Naive thymus-derived CD4-positive, alpha-beta T cell (primary cell): ENCODE measurements at regions of chr12 and their contacts with region 1.

Region 1: GRCh38 chr12:81992461-81992860 is 233.3 kb upstream of the PPFIA2 start:
- DNase-seq: peak in 7 of 9 donors; percentile 30 to 61 (median 51)
- ATAC-seq: peak; percentile 85
- H3K4me3 ChIP-seq: no peak overlapping the region
- H3K4me3 Mint-ChIP-seq: no peak overlapping the region
- H3K27ac ChIP-seq: no peak overlapping the region
- H3K27ac Mint-ChIP-seq: no peak overlapping the region
- H3K4me1 ChIP-seq: no peaks in the 10 kb centered on the region
- H3K4me1 Mint-ChIP-seq: peaks cover 0 to 7% (median 5%) of the 10 kb centered on the region in 7 donors
- H3K27me3 ChIP-seq: no peaks in the 10 kb centered on the region
- H3K27me3 Mint-ChIP-seq: no peaks in the 10 kb centered on the region

Region 2: DNA sequence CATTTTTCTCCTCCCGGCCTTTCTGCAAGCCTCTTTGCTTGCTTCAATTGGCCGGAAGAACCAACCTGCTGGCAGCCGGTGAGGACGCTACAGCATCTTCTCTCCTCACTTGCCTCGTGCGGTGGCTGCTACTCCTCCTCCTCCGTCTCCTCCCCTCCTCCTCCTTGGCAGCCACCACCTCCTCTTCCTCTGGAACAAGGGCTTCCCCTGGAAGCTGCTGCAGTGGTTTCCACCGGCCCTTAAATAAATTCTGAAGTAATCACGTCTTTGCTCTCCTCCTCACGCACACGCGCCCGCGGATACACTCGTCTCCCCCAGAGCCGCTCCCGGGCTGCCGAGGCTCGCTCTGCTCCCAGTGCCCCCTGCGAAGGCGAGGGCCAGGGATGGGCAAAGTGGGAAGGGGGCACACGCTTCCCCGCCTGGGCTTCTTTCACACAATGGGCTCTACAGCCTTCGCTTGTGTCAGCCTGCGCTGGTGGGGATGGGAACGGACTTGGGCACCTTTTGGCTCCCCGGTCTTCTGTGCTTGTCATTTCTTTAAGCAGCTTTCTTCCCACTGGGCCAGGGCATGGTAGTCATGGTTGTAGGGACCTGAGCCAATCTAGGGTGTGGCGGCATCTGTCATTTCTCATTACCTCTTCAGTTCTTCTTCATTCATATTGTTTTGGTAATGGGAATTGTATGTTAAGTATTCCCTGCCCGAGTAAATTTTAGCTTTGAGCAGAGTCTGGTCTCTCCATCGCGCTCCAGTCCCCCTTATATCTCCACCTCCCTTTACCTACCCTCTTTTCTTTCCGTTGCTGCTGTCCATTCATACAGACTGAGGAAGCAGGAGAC is 233.0 kb before region 1 on chr12 and contains the start of gene PPFIA2:
- CTCF ChIA-PET with region 1: no interaction called
- POLR2A ChIA-PET with region 1: no interaction called
- intact Hi-C with region 1: loop called in 1 of 2 experiments (anchors 1 kb)
- DNase-seq: peak in 6 of 9 donors; percentile 3 to 27 (median 22)
- ATAC-seq: peak; percentile 47
- H3K4me3 ChIP-seq: peak within 1 kb of the TSS; percentile 26
- H3K4me3 Mint-ChIP-seq: peak within 1 kb of the TSS; percentile 58 to 83 (median 75)
- H3K27ac ChIP-seq: no peak within 1 kb of the TSS
- H3K27ac Mint-ChIP-seq: no peak within 1 kb of the TSS
- H3K4me1 ChIP-seq: no peaks in the 10 kb centered on the region
- H3K4me1 Mint-ChIP-seq: peaks cover 10 to 19% (median 15%) of the 10 kb centered on the region in 7 donors
- H3K27me3 ChIP-seq: peaks cover 0 to 2% of the 10 kb centered on the region in 2 donors
- H3K27me3 Mint-ChIP-seq: peaks cover 43 to 52% (median 46%) of the 10 kb centered on the region in 5 donors
- total RNA-seq, gene PPFIA2: not detected

Region 3: GRCh38 chr12:81797100-81797499 is 195.4 kb before region 1 on chr12:
- CTCF ChIA-PET with region 1: interaction called, 3 read pairs
- POLR2A ChIA-PET with region 1: no interaction called
- intact Hi-C with region 1: loop called in 1 of 2 experiments (anchors 2 kb)
- DNase-seq: peak in 2 of 9 donors; percentile 4 to 7
- ATAC-seq: no peak
- H3K4me3 ChIP-seq: no peak overlapping the region
- H3K4me3 Mint-ChIP-seq: no peak overlapping the region
- H3K27ac ChIP-seq: no peak overlapping the region
- H3K27ac Mint-ChIP-seq: no peak overlapping the region
- H3K4me1 ChIP-seq: no peaks in the 10 kb centered on the region
- H3K4me1 Mint-ChIP-seq: no peaks in the 10 kb centered on the region
- H3K27me3 ChIP-seq: no peaks in the 10 kb centered on the region
- H3K27me3 Mint-ChIP-seq: peaks cover 1 to 20% (median 11%) of the 10 kb centered on the region in 5 donors

Region 4: DNA sequence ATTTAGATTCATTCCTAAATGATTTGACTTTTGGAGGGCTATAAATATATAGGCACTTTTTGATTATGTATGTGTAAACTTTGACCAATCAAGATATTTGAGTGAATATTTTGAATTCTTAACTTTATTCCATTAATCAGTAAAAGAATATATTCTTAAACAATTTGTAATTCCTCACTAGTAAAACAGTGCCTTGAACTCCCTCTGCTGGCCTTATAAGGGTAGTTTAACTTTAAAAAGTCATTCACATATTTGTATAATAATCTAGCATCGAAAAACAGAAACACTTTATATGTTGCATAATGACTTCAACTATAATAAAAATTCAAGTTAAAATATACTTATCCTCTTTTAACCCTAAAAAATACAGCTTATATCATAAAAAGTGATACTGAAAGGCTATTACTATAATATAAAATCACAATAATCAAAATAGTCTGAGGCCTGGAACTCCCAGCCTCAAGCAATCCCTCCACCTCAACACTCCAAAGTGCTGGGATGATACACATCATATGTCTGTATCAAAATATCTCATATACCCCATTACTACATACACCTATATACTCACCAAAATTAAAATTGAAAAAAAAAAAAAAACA is 334.5 kb after region 1 on chr12:
- CTCF ChIA-PET with region 1: interaction called, 6 read pairs
- POLR2A ChIA-PET with region 1: no interaction called
- intact Hi-C with region 1: loop called in 1 of 2 experiments (anchors 1 kb)
- DNase-seq: peak in 3 of 9 donors; percentile 7 to 25 (median 9)
- ATAC-seq: no peak
- H3K4me3 ChIP-seq: no peak overlapping the region
- H3K4me3 Mint-ChIP-seq: no peak overlapping the region
- H3K27ac ChIP-seq: no peak overlapping the region
- H3K27ac Mint-ChIP-seq: no peak overlapping the region
- H3K4me1 ChIP-seq: no peaks in the 10 kb centered on the region
- H3K4me1 Mint-ChIP-seq: no peaks in the 10 kb centered on the region
- H3K27me3 ChIP-seq: no peaks in the 10 kb centered on the region
- H3K27me3 Mint-ChIP-seq: peaks cover 0 to 6% (median 3%) of the 10 kb centered on the region in 5 donors

Region 5: DNA sequence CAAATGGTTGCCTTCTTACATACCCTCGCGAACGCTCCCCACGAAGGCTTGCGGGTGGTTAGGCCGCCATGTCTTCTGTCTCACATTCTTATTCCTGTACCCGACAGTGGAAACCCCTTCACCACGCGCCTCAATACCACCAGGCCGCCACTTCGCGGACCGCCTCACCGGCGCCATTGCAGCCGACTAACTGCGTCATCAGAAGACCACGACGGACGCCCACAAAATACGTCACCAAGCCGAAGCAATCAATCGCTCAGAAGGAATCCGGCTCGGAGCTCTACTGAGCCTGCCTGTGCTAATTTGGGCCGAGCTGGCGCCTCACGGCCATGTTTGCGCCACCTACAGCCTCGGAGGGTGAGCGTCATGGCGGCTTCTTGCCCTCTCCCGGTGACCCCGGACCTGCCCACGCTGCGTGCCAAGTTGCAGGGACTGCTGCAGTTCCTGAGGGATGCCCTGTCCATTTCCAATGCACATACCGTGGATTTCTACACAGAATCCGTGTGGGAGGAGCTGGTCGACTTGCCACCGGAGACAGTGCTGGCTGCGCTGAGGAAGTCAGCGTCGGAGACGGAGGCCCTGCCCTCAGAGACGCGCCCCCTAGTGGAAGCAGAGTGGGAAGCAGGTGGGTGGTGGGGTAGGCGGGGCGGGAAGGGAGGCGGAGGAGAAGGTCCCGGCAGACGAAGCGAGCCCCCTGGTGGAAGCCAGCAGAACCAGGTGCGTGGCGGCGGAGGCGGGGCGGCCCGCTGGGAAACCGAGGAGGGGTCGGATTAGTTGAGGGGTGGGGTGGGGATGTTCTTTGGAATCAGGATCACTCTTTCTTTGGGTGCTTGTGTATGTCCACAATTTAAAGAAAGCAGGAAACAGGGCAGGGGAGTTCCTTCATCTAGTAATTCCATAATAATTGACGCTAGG is 366.0 kb after region 1 on chr12 and contains the starts of genes CCDC59 and METTL25:
- CTCF ChIA-PET with region 1: no interaction called
- POLR2A ChIA-PET with region 1: no interaction called
- intact Hi-C with region 1: loop called in 1 of 2 experiments (anchors 1 kb)
- DNase-seq: peak; percentile 95 to 100 (median 98)
- ATAC-seq: peak; percentile 94
- H3K4me3 ChIP-seq: peak within 1 kb of the TSS; percentile 93
- H3K4me3 Mint-ChIP-seq: peak within 1 kb of the TSS; percentile 92 to 100 (median 98)
- H3K27ac ChIP-seq: peak within 1 kb of the TSS; percentile 95
- H3K27ac Mint-ChIP-seq: peak within 1 kb of the TSS; percentile 99 to 100 (median 100)
- H3K4me1 ChIP-seq: peaks cover 27 to 31% of the 10 kb centered on the region in 2 donors
- H3K4me1 Mint-ChIP-seq: peaks cover 24 to 80% (median 69%) of the 10 kb centered on the region in 7 donors
- H3K27me3 ChIP-seq: no peaks in the 10 kb centered on the region
- H3K27me3 Mint-ChIP-seq: peaks cover 0 to 4% (median 0%) of the 10 kb centered on the region in 5 donors
- total RNA-seq, gene CCDC59: 44.9 to 150 (median 70.8) TPM
- total RNA-seq, gene METTL25: 8.6 to 27.5 (median 14.5) TPM